ENCODE measurements at regions of chr7 and their contacts with region 1.

Region 1: GRCh38 chr7:105202616-105203015 is 186.1 kb downstream of the SRPK2 start:
- DNase-seq: no peak
- H3K4me3 Mint-ChIP-seq: no peak overlapping the region
- H3K27ac Mint-ChIP-seq: no peak overlapping the region
- H3K4me1 Mint-ChIP-seq: peaks cover 35% of the 10 kb centered on the region
- H3K27me3 Mint-ChIP-seq: no peaks in the 10 kb centered on the region

Region 2: DNA sequence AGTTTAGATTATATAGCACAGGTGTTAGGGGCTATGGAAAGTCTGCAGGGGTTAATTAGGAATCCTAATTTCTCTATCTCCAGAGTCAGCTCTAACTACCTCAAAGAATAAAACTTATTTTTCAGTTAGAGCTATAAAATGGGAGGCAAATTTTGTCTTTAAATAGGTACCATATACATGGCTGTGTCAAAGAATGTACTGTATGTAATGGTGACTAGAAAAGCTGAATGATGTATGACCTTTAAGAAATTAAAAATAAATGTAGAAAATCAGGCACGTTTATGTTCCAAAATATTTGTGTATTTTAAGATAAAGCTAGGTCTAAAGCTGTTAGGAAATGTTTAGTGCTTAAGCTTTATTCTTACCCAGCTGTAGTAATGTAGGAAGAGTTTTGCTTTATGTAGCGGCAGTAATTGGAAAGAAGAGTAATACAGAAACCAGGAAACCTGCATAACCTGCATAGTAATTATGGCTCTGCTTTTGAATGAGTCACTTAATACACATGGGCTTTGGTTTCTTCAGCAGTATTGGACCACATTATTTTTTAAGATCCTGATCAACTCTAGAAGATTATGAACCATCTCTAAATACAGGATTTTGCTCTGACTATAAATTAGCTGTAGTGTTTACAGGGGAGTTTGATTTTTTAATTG is 103.6 kb before region 1 on chr7:
- intact Hi-C with region 1: loop called (anchors 10 kb)
- DNase-seq: no peak
- H3K4me3 Mint-ChIP-seq: no peak overlapping the region
- H3K27ac Mint-ChIP-seq: peak overlapping the region; percentile 63
- H3K4me1 Mint-ChIP-seq: peaks cover 41% of the 10 kb centered on the region
- H3K27me3 Mint-ChIP-seq: no peaks in the 10 kb centered on the region

Region 3: GRCh38 chr7:105149827-105150226 is 52.8 kb before region 1 on chr7:
- intact Hi-C with region 1: loop called (anchors 10 kb)
- DNase-seq: no peak
- H3K4me3 Mint-ChIP-seq: no peak overlapping the region
- H3K27ac Mint-ChIP-seq: no peak overlapping the region
- H3K4me1 Mint-ChIP-seq: peaks cover 18% of the 10 kb centered on the region
- H3K27me3 Mint-ChIP-seq: no peaks in the 10 kb centered on the region

Region 4: DNA sequence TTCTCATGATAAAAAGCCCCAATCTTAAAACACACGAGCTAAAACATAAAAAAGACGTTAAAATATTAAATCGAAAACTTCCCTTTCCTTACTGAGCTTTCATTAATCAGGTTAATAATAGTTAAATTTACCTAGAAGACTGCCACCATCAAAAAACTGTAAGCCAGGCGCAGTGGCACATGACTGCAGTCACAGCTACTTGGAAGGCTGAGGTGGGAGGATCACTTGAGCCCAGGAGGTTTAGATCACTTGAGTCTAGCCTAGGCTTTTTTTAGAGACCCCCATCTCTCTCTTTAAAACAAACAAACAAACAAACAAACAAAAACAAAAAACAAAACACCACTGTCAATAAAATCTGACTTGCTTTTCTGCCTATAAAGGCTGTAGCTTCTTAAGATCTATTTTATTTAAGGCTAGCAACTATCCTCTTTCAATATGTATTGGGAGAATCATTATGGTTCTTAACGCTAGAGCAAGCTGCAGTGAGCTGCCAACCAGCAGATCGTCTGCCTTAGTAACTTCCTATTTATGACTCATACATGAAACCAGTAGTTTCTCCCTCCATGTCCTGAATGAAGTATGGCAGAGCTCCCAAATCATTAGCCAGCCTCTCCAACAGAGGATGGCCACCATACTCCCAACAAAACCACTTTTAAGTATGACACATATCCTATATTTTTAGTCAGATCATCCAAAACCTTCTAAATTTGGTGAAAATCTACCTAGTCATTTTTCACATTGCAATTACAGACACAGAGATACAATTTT is 22.5 kb after region 1 on chr7:
- intact Hi-C with region 1: loop called (anchors 1 kb)
- DNase-seq: no peak
- H3K4me3 Mint-ChIP-seq: no peak overlapping the region
- H3K27ac Mint-ChIP-seq: no peak overlapping the region
- H3K4me1 Mint-ChIP-seq: peaks cover 13% of the 10 kb centered on the region
- H3K27me3 Mint-ChIP-seq: no peaks in the 10 kb centered on the region

Measured in activated T-helper 2 cell treated with anti-CD3 and anti-CD28 coated beads, Interferon-gamma antibody, Interleukin-2, Interleukin-4, amounts not matched to agents 10 μg/mL and 5 μg/mL and 100 μg/mL, durations not matched to agents 14 hours and 24 hours and 36 hours (primary cell).